RWPE1 (cell line): ENCODE measurements at regions of chr14 and their contacts with region 1.

Region 1: GRCh38 chr14:50101417-50101816 is 15.0 kb downstream of the VCPKMT start:
- DNase-seq: no peak
- H3K27ac ChIP-seq: no peak overlapping the region
- CTCF ChIP-seq: no peak

Region 2: GRCh38 chr14:49862089-49862673 is 239.2 kb before region 1 on chr14:
- CTCF ChIA-PET with region 1: interaction called, 14 read pairs
- POLR2A ChIA-PET with region 1: no interaction called
- DNase-seq: peak; percentile 56
- H3K27ac ChIP-seq: peak overlapping the region; percentile 93
- CTCF ChIP-seq: peak; percentile 100

Region 3: GRCh38 chr14:50003213-50004031 is 98.0 kb before region 1 on chr14:
- CTCF ChIA-PET with region 1: interaction called, 11 read pairs
- POLR2A ChIA-PET with region 1: no interaction called
- DNase-seq: peak; percentile 63
- H3K27ac ChIP-seq: peak overlapping the region; percentile 99
- CTCF ChIP-seq: peak; percentile 24; the same call in 1 of the 2 replicates